Activated CD4-positive, alpha-beta T cell treated with anti-CD3 and anti-CD28 coated beads for 36 hours (primary cell): ENCODE measurements at regions of chr20 and their contacts with region 1.

Region 1: DNA sequence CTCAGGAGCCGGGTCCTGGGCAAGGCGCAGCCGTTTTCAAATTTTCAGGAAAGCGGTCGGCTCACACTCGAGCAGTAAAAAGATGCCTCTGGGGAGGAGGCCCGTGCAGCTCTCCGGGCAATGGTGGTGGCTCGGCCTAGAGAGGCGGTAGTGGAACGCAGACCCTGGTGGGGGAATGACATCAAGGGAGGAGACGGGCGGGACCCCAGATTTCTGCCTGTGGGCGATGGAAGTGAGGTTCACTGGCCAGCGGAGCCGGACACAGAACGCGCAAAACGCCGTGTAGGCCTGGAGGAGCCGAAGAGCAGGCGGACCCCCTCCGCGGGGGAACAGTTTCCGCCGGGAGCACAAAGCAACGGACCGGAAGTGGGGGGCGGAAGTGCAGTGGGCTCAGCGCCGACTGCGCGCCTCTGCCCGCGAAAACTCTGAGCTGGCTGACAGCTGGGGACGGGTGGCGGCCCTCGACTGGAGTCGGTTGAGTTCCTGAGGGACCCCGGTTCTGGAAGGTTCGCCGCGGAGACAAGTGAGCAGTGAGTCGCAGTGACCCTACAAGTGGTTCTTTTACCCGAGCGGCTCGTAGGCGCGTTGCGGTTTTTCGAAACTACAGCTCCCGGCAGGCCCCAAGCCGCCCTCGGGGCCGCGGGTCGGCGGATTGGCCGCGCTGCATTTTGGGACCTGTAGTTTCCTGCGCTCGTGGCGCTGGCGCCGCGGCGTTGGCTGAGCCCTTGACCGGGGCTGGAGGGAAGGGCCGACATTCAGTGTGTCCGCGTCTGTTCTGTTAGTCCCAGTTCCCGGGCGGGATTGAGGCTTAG is at the start of gene RTEL1:
- DNase-seq: peak; percentile 92
- ATAC-seq: peak; percentile 82
- H3K4me3 Mint-ChIP-seq: peak within 1 kb of the TSS; percentile 95
- H3K27ac Mint-ChIP-seq: peak within 1 kb of the TSS; percentile 94
- H3K4me1 Mint-ChIP-seq: peaks cover 30% of the 10 kb centered on the region
- H3K27me3 Mint-ChIP-seq: no peaks in the 10 kb centered on the region
- total RNA-seq, gene RTEL1: 44.5 to 44.7 TPM

Region 2: DNA sequence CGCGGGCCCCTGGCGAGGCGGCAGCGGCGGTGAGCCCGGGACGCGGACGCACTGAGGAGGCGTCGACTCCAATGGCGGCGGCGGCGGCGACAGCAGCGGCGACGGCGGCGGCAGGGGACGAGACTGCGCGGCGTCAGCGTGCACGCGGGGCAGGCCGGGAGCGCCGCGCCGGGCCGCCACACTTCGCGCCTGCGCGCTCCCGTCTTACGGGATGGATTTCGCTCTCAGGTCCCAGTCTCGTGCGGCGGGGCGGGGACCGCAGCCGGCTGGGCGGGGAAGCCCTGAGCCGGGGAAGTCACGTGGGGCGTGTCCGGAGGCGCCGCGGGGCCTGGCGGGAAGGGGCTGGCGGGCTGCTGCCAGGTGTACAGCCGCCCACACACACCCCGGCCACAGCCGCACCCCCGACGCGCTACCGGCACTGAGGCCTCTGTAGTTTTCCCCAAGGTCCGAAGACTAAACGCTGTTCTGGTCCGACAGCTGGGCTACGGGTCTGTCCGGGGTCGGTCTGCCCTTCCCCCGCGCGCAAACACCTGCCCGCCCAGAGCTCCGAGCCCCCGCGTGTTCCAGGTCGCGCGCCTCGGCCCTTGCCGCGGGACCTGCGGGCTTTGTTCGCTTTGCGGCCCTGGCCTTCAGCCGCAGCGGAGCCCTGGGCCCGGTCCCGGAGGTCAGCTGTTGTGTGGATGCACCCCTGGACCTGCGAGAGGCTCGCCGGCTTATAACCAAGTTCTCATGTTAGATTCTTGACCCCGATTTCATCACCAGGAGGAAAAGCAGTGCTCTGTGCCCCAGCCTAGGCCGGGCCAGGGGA is 441.9 kb before region 1 on chr20 and contains the start of gene YTHDF1:
- CTCF ChIA-PET with region 1: no interaction called
- POLR2A ChIA-PET with region 1: no interaction called
- intact Hi-C with region 1: loop called in 1 of 2 experiments (anchors 5 kb)
- DNase-seq: peak; percentile 98
- ATAC-seq: peak; percentile 98
- H3K4me3 Mint-ChIP-seq: peak within 1 kb of the TSS; percentile 92
- H3K27ac Mint-ChIP-seq: peak within 1 kb of the TSS; percentile 88
- H3K4me1 Mint-ChIP-seq: peaks cover 43% of the 10 kb centered on the region
- H3K27me3 Mint-ChIP-seq: peaks cover 4% of the 10 kb centered on the region
- total RNA-seq, gene YTHDF1: 32.2 to 32.6 TPM

Region 3: DNA sequence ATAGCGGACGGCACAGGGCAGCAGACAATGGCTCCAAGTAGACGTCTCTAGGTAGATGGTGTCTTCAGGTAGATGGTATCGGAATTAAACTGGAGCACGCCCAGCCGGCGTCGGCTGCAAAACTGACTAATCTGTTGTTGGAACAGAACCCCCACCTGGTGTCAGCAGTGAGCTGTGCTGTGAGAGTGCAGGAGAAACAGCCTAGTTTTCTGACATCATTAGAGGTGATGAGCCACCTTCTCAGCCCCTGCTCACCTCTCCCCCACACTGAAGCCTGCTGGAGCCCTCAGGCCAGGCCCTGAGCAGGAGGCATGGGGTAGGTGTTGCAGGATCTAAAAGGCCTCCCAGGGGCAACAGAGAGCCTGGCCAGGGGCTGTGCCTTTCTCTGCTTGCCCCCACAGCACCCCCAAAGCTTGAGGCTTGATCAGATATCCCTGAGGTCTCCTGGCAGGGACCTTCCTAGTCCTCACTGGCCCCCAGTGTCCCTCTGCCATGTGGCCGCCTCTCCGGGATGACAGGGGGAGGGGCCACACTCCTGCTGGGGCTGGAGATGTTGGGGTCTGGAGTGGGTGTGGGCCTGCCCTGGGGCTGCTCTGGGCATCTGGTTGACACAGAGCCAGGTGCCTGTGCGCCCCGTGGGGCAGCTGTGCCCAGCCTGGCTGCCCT is 77.2 kb before region 1 on chr20:
- CTCF ChIA-PET with region 1: interaction called, 3 read pairs
- POLR2A ChIA-PET with region 1: no interaction called
- intact Hi-C with region 1: loop called in 1 of 2 experiments (anchors 5 kb)
- DNase-seq: peak; percentile 88
- ATAC-seq: peak; percentile 100
- H3K4me3 Mint-ChIP-seq: no peak overlapping the region
- H3K27ac Mint-ChIP-seq: no peak overlapping the region
- H3K4me1 Mint-ChIP-seq: peaks cover 4% of the 10 kb centered on the region
- H3K27me3 Mint-ChIP-seq: peaks cover 2% of the 10 kb centered on the region

Region 4: DNA sequence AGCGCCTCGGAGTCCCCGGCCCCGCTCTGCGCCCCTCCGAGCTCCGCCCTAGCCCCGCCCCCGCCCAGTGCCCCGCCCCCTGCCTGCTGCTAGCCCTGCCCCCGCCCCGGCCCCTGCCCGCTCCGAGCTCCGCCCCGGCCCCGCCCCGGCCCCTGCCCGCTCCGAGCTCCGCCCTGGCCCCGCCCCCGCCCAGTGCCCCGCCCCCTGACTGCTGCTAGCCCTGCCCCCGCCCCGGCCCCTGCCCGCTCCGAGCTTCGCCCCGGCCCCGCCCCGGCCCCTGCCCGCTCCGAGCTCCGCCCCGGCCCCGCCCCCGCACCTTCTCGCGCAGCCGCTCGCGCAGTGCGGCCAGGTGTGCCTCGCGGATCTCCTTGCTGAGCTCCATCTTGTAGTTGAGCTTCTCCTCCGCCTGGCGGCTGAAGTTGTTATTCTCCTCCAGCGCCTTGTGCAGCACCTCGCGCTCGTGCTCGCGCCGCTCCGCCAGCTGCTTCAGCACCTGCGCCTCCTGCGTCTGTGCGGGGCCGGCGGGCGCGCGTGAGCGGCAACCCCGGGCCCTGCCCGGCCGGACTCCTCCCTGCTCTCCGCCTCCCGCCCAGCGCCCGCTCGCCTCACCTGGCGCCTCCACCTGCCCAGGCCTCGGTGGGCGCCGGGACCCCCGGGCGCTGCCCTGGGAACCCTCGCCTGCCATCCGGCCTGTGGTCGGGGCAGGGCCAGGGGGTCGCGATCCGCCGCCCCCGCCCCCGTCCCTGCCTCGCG is 16.2 kb before region 1 on chr20:
- CTCF ChIA-PET with region 1: interaction called, 9 read pairs
- POLR2A ChIA-PET with region 1: interaction called, 8 read pairs
- intact Hi-C with region 1: loop called (anchors 1 kb)
- DNase-seq: peak; percentile 98
- ATAC-seq: peak; percentile 73
- H3K4me3 Mint-ChIP-seq: peak overlapping the region; percentile 65
- H3K27ac Mint-ChIP-seq: no peak overlapping the region
- H3K4me1 Mint-ChIP-seq: peaks cover 31% of the 10 kb centered on the region
- H3K27me3 Mint-ChIP-seq: no peaks in the 10 kb centered on the region

Region 5: GRCh38 chr20:63955827-63956663 is 297.9 kb after region 1 on chr20 and contains the start of gene UCKL1:
- CTCF ChIA-PET with region 1: no interaction called
- POLR2A ChIA-PET with region 1: no interaction called
- intact Hi-C with region 1: loop called in 1 of 2 experiments (anchors 1 kb)
- DNase-seq: peak; percentile 95
- ATAC-seq: peak; percentile 78
- H3K4me3 Mint-ChIP-seq: peak within 1 kb of the TSS; percentile 77
- H3K27ac Mint-ChIP-seq: peak within 1 kb of the TSS; percentile 89
- H3K4me1 Mint-ChIP-seq: peaks cover 37% of the 10 kb centered on the region
- H3K27me3 Mint-ChIP-seq: no peaks in the 10 kb centered on the region
- total RNA-seq, gene UCKL1: 28.3 to 32.2 TPM